ENCODE measurements at regions of chr9 and their contacts with region 1.

Region 1: DNA sequence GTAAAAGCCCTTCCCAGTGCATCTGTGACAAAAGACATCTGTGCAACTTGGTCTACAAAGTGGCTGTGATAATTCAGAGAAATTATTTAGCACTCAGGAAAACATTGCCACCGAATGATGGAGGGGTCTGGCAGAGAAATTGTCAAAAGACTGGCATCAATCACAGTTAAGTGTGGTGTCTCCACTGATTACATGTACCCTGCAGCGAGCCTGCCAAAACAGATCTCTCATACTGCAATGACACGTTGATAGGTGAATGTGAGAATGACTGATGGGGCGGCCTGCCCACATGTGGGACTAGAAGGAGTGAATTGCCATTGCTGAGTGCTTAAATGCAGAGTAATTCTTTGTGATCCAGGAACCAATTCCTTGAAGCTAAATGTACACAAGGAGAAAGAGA is 136.4 kb upstream of the PCSK5 start:
- DNase-seq: peak; percentile 66
- ATAC-seq: peak; percentile 97

Region 2: GRCh38 chr9:75552941-75553340 is 201.1 kb before region 1 on chr9:
- intact Hi-C with region 1: no loop called
- DNase-seq: no peak
- ATAC-seq: no peak

Region 3: GRCh38 chr9:75636427-75637045 is 117.5 kb before region 1 on chr9:
- intact Hi-C with region 1: loop called (anchors 5 kb)
- DNase-seq: no peak
- ATAC-seq: peak; percentile 90

Region 4: GRCh38 chr9:75903785-75904360 is 149.8 kb after region 1 on chr9:
- intact Hi-C with region 1: no loop called
- DNase-seq: no peak
- ATAC-seq: no peak

Measured in Right ventricle myocardium inferior (tissue), 1 donor.